Tibial artery (tissue), 4 donors: ENCODE measurements at regions of chr10 and their contacts with region 1.

Region 1: GRCh38 chr10:114694752-114695151 is 36.7 kb upstream of the ABLIM1 start:
- DNase-seq: no peak
- H3K4me3 ChIP-seq: no peak overlapping the region
- H3K27ac ChIP-seq: no peak overlapping the region
- H3K4me1 ChIP-seq: peaks cover 0 to 9% (median 4%) of the 10 kb centered on the region in 4 donors
- H3K27me3 ChIP-seq: no peaks in the 10 kb centered on the region
- CTCF ChIP-seq: no peak

Region 2: GRCh38 chr10:114304017-114304570 is 390.7 kb before region 1 on chr10:
- intact Hi-C with region 1: no loop called
- DNase-seq: peak; percentile 84 to 90
- H3K4me3 ChIP-seq: peak overlapping the region; percentile 36 to 39
- H3K27ac ChIP-seq: peak overlapping the region; percentile 54 to 57
- H3K4me1 ChIP-seq: peaks cover 0 to 53% (median 25%) of the 10 kb centered on the region in 4 donors
- H3K27me3 ChIP-seq: no peaks in the 10 kb centered on the region
- CTCF ChIP-seq: peak; percentile 75 to 82

Region 3: GRCh38 chr10:114320249-114321116 is 374.3 kb before region 1 on chr10:
- intact Hi-C with region 1: no loop called
- DNase-seq: no peak
- H3K4me3 ChIP-seq: no peak overlapping the region
- H3K27ac ChIP-seq: no peak overlapping the region
- H3K4me1 ChIP-seq: no peaks in the 10 kb centered on the region
- H3K27me3 ChIP-seq: no peaks in the 10 kb centered on the region
- CTCF ChIP-seq: no peak

Region 4: DNA sequence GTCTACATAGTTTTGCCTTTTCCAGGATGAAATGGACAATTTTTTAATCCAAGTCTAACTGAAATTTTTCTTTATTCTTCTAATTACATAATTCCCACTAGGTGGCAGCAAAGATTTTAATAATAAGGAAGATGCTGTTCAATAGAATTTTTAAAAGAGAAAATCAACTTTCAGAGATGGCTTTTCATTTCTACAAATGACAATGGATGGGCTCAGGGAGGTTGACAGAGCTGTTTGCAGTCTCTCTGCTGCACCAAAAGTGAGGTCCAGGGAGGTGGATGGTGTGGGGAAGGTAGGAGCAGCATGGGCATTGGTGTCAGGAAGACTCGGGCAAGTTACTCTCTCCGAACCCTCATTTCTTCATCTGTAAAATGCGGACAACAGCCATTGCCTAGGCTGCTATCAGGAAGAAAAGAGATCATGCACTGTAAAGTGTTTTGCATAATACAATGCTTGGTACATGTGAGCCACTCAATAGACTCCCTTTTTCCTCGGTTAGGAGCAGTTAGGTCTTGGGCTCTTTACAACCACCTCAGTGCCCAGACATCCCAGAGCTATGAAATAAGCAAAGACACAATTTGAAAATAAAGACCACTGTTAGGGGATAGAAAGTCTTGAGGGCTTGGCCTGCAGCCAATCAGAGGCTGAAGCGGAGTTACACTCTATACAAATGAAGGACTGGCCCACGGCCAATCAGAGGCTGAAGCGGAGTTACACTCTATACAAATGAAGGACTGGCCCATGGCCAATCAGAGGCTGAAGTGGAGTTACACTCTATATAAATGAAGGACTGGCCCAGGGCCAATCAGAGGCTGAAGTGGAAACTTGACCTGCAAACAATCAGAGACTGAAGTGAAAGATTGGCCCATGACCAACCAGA is 143.8 kb before region 1 on chr10:
- intact Hi-C with region 1: loop called (anchors 5 kb)
- DNase-seq: peak in 1 of 2 donors; percentile 62
- H3K4me3 ChIP-seq: no peak overlapping the region
- H3K27ac ChIP-seq: peak overlapping the region in 1 of 2 donors; percentile 7
- H3K4me1 ChIP-seq: peaks cover 0 to 17% (median 12%) of the 10 kb centered on the region in 4 donors
- H3K27me3 ChIP-seq: no peaks in the 10 kb centered on the region
- CTCF ChIP-seq: peak; percentile 43 to 77